AG04449 (cell line): ENCODE measurements at regions of chr16 and their contacts with region 1.

Region 1: GRCh38 chr16:49910541-49911071 is 54.7 kb upstream of the ZNF423 start:
- DNase-seq: no peak
- H3K4me3 ChIP-seq: no peak overlapping the region
- CTCF ChIP-seq: no peak

Region 2: DNA sequence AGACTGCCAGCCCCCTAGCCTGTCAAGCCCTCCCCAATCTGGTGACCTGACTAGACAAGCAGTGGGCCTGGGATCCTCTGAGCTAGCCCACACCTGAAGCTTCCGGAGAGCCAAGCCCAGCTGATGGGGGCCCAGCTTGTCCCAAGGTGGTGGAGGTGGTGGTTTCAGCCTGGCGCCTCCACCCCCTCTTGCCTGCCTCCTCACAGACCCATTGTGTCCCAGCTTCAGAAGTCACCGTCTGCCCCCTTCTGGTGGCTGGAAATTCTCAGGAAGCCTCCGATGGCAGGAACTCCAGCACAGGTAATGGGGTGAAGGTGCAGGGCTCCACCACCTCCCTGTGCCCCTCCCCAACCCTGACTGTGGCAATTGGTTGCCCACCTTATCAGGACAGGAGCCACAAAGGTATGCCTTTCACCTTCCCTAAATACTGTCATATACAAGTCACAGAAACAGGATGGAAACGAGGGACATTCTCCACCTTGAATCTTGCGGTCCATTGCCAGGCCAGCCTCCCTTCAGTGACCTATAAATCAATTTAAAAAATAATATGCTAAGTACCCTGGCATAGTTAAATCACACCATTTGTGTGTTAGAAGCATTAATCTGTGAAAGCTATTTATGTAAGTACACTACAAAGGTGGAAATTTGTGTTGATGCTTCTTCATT is 11.3 kb after region 1 on chr16:
- CTCF ChIA-PET with region 1: interaction called, 12 read pairs
- POLR2A ChIA-PET with region 1: no interaction called
- DNase-seq: no peak
- H3K4me3 ChIP-seq: no peak overlapping the region
- CTCF ChIP-seq: peak; percentile 71

Region 3: DNA sequence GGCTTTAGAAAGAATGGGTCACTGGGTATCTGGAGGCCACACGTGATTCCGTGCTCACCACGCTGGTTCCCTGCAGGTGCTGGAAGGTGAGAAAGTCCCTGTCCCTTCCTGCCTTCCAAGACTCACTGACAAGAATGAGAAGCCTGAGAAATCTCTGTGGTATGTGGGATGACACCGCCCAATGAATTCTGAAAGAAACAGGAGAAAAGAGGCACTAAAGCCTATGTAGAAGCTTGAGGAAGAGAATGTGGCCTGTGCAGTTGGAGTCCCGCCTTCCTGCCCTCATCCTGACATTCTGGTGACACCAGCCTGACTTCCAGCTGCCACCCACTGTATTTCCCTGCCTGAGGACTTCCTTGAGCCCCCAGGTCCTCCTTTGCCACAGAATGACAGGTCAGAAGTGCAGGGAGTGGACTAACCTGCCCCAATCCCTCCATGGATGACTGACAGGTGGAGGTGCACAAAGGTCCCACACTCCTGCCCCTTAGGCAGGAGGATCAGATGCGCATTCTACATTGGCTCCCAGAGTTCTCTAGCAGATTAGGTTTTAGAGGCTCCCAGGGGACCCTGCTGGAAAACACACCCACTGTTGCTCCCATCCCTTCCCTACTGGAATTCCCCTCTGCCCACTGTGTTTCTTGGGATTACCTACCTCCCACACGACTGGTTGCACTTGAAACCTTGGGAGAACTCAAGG is 203.9 kb after region 1 on chr16:
- CTCF ChIA-PET with region 1: no interaction called
- POLR2A ChIA-PET with region 1: no interaction called
- DNase-seq: no peak
- H3K4me3 ChIP-seq: no peak overlapping the region
- CTCF ChIP-seq: no peak